ENCODE measurements at regions of chrX and their contacts with region 1.

Region 1: GRCh38 chrX:71616672-71617529 is 1.4 kb downstream of the CXCR3 start:
- DNase-seq: peak; percentile 24 to 71 (median 38)
- H3K4me3 ChIP-seq: peak overlapping the region; percentile 60
- H3K4me3 Mint-ChIP-seq: peak overlapping the region; percentile 91 to 95 (median 93)
- H3K27ac ChIP-seq: peak overlapping the region; percentile 69
- H3K27ac Mint-ChIP-seq: peak overlapping the region; percentile 95 to 100 (median 96)
- H3K4me1 ChIP-seq: peaks cover 32% of the 10 kb centered on the region
- H3K4me1 Mint-ChIP-seq: peaks cover 63 to 82% (median 69%) of the 10 kb centered on the region in 3 donors
- H3K27me3 ChIP-seq: no peaks in the 10 kb centered on the region
- H3K27me3 Mint-ChIP-seq: peaks cover 0 to 5% of the 10 kb centered on the region in 2 donors

Region 2: GRCh38 chrX:71525316-71525715 is 91.6 kb before region 1 on chrX:
- CTCF ChIA-PET with region 1: no interaction called
- POLR2A ChIA-PET with region 1: no interaction called
- DNase-seq: no peak
- H3K4me3 ChIP-seq: no peak overlapping the region
- H3K4me3 Mint-ChIP-seq: no peak overlapping the region
- H3K27ac ChIP-seq: no peak overlapping the region
- H3K27ac Mint-ChIP-seq: no peak overlapping the region
- H3K4me1 ChIP-seq: no peaks in the 10 kb centered on the region
- H3K4me1 Mint-ChIP-seq: peaks cover 0 to 9% (median 0%) of the 10 kb centered on the region in 3 donors
- H3K27me3 ChIP-seq: no peaks in the 10 kb centered on the region
- H3K27me3 Mint-ChIP-seq: peaks cover 0 to 2% of the 10 kb centered on the region in 2 donors

Region 3: GRCh38 chrX:71579136-71579989 is 37.5 kb before region 1 on chrX:
- CTCF ChIA-PET with region 1: no interaction called
- POLR2A ChIA-PET with region 1: no interaction called
- DNase-seq: peak in 1 of 5 donors; percentile 47
- H3K4me3 ChIP-seq: no peak overlapping the region
- H3K4me3 Mint-ChIP-seq: peak overlapping the region in 1 of 7 donors; percentile 68
- H3K27ac ChIP-seq: no peak overlapping the region
- H3K27ac Mint-ChIP-seq: peak overlapping the region in 5 of 8 donors; percentile 3 to 84 (median 56)
- H3K4me1 ChIP-seq: no peaks in the 10 kb centered on the region
- H3K4me1 Mint-ChIP-seq: peaks cover 3 to 15% (median 4%) of the 10 kb centered on the region in 3 donors
- H3K27me3 ChIP-seq: no peaks in the 10 kb centered on the region
- H3K27me3 Mint-ChIP-seq: peaks cover 0 to 2% of the 10 kb centered on the region in 2 donors

Region 4: GRCh38 chrX:71606536-71607216 is 10.2 kb before region 1 on chrX:
- CTCF ChIA-PET with region 1: interaction called, 12 read pairs
- POLR2A ChIA-PET with region 1: interaction called, 4 read pairs
- DNase-seq: peak in 3 of 5 donors; percentile 71 to 78 (median 72)
- H3K4me3 ChIP-seq: peak overlapping the region; percentile 37
- H3K4me3 Mint-ChIP-seq: peak overlapping the region; percentile 60 to 85 (median 72)
- H3K27ac ChIP-seq: peak overlapping the region; percentile 16
- H3K27ac Mint-ChIP-seq: peak overlapping the region; percentile 91 to 99 (median 96)
- H3K4me1 ChIP-seq: peaks cover 44% of the 10 kb centered on the region
- H3K4me1 Mint-ChIP-seq: peaks cover 63 to 82% (median 79%) of the 10 kb centered on the region in 3 donors
- H3K27me3 ChIP-seq: no peaks in the 10 kb centered on the region
- H3K27me3 Mint-ChIP-seq: no peaks in the 10 kb centered on the region

Region 5: GRCh38 chrX:71629467-71629866 is 12.6 kb after region 1 on chrX:
- CTCF ChIA-PET with region 1: no interaction called
- POLR2A ChIA-PET with region 1: no interaction called
- DNase-seq: no peak
- H3K4me3 ChIP-seq: no peak overlapping the region
- H3K4me3 Mint-ChIP-seq: no peak overlapping the region
- H3K27ac ChIP-seq: no peak overlapping the region
- H3K27ac Mint-ChIP-seq: no peak overlapping the region
- H3K4me1 ChIP-seq: peaks cover 3% of the 10 kb centered on the region
- H3K4me1 Mint-ChIP-seq: peaks cover 12 to 18% (median 14%) of the 10 kb centered on the region in 3 donors
- H3K27me3 ChIP-seq: no peaks in the 10 kb centered on the region
- H3K27me3 Mint-ChIP-seq: peaks cover 0 to 6% of the 10 kb centered on the region in 2 donors

Region 6: GRCh38 chrX:71652405-71652804 is 35.5 kb after region 1 on chrX:
- CTCF ChIA-PET with region 1: interaction called, 35 read pairs
- POLR2A ChIA-PET with region 1: interaction called, 19 read pairs
- DNase-seq: peak; percentile 19 to 66 (median 51)
- H3K4me3 ChIP-seq: no peak overlapping the region
- H3K4me3 Mint-ChIP-seq: no peak overlapping the region
- H3K27ac ChIP-seq: no peak overlapping the region
- H3K27ac Mint-ChIP-seq: peak overlapping the region in 2 of 8 donors; percentile 36 to 48
- H3K4me1 ChIP-seq: no peaks in the 10 kb centered on the region
- H3K4me1 Mint-ChIP-seq: peaks cover 14 to 23% (median 16%) of the 10 kb centered on the region in 3 donors
- H3K27me3 ChIP-seq: no peaks in the 10 kb centered on the region
- H3K27me3 Mint-ChIP-seq: peaks cover 0 to 5% of the 10 kb centered on the region in 2 donors

Measured in CD8-positive, alpha-beta memory T cell (primary cell).